ENCODE measurements at regions of chr1 and their contacts with region 1.

Region 1: DNA sequence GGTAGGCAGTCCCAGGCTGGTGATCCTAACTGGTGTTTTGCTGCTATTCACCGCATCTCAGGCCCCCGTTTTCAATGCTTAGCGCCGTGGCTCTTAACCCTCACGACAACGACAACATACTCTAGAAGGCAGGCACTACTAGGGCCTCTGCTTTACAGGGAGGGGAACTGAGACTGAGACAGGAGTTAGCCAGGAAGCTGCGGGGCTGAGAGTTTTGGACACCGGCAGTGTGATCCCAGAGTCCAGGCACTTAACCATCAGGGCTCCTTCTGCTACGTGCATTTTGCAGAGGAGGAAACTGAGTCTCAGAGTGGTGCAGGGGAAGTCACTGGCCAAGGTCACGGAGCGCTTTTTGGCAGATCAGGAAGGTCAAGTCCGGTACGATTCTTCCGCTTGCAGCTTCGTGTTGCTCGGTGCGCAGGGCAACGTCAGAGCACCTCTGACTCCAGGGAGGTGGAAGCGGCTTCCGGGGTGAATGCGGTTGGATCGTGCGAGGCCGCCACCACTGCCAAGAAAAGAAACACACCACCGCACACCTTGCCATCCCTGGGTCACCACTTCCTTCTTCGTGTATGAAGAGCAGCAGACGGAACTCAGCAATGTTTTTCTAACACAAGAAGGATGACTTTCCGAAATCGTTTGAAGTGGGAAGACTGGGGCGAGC is 300.3 kb downstream of the RRAGC start:
- DNase-seq: peak; percentile 88
- ATAC-seq: peak; percentile 84
- H3K4me3 ChIP-seq: peak overlapping the region; percentile 19 to 58 (median 41)
- H3K4me3 Mint-ChIP-seq: peak overlapping the region; percentile 92
- H3K27ac ChIP-seq: peak overlapping the region; percentile 58 to 76
- H3K27ac Mint-ChIP-seq: peak overlapping the region; percentile 95
- H3K4me1 ChIP-seq: peaks cover 21 to 37% of the 10 kb centered on the region in 2 donors
- H3K4me1 Mint-ChIP-seq: peaks cover 53% of the 10 kb centered on the region
- H3K27me3 ChIP-seq: no peaks in the 10 kb centered on the region
- H3K27me3 Mint-ChIP-seq: no peaks in the 10 kb centered on the region
- CTCF ChIP-seq: no peak

Region 2: DNA sequence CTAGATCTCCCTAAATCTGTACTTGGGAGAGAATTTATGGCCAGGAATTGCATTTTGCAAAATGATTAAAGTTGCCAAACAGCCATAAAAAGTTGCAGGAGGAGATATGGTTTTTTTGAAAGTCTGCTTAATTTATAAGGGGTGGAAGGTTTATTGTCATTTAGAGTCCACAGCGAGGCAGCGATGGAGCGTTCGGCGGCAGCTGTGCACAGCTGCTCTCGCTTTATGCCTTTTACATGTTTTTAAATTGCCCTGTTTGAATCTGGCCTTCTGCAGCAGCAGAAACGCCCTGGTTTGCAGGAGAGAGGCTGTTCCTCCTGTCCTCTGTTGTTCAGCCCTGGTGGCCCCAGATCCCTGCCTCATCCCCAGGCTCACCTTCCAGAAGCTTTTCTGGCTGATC is 367.8 kb before region 1 on chr1:
- CTCF ChIA-PET with region 1: no interaction called
- POLR2A ChIA-PET with region 1: no interaction called
- intact Hi-C with region 1: no loop called
- DNase-seq: no peak
- ATAC-seq: no peak
- H3K4me3 ChIP-seq: no peak overlapping the region
- H3K4me3 Mint-ChIP-seq: no peak overlapping the region
- H3K27ac ChIP-seq: no peak overlapping the region
- H3K27ac Mint-ChIP-seq: no peak overlapping the region
- H3K4me1 ChIP-seq: peaks cover 3 to 12% of the 10 kb centered on the region in 2 donors
- H3K4me1 Mint-ChIP-seq: peaks cover 15% of the 10 kb centered on the region
- H3K27me3 ChIP-seq: peaks cover 0 to 8% (median 4%) of the 10 kb centered on the region in 4 experiments
- H3K27me3 Mint-ChIP-seq: peaks cover 11% of the 10 kb centered on the region
- CTCF ChIP-seq: no peak

Region 3: DNA sequence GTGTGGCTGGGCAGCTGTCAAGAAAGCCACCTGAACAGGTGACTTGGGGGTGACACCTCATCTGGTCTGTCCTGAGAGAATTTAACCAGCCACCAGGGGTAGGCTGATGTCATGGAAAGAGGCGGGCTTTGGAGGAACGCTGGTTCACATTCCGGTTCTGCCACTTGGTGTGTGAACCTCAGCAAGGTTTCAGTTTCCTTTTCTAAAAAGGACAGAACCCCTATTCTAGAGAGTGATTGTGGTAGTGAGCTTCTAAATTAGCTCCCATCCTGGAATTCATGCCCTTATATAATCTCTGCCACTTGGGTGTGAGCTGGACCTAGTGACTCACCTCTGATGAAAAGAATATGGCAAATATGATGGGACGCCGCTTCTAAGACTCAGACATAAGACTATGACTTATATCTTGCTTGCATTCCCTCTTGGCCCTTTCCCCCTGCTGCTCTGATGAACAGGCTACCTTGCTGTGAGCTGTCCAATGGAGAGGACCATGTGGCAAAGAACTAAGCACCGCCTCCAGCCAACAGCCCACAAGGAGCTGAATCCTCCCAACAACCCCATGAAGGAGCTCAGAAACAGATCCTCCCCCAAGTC is 31.8 kb before region 1 on chr1:
- CTCF ChIA-PET with region 1: no interaction called
- POLR2A ChIA-PET with region 1: no interaction called
- intact Hi-C with region 1: loop called (anchors 1 kb)
- DNase-seq: peak; percentile 67
- ATAC-seq: peak; percentile 69
- H3K4me3 ChIP-seq: peak overlapping the region in 2 of 5 experiments; percentile 13 to 21
- H3K4me3 Mint-ChIP-seq: peak overlapping the region; percentile 61
- H3K27ac ChIP-seq: no peak overlapping the region
- H3K27ac Mint-ChIP-seq: peak overlapping the region; percentile 72
- H3K4me1 ChIP-seq: peaks cover 9 to 11% of the 10 kb centered on the region in 2 donors
- H3K4me1 Mint-ChIP-seq: peaks cover 14% of the 10 kb centered on the region
- H3K27me3 ChIP-seq: no peaks in the 10 kb centered on the region
- H3K27me3 Mint-ChIP-seq: peaks cover 23% of the 10 kb centered on the region
- CTCF ChIP-seq: no peak